Activated T-helper 1 cell treated with anti-CD3 and anti-CD28 coated beads, Interleukin-12 subunit alpha, Interleukin-12 subunit beta, Interleukin-2, Interleukin-4 antibody, amounts not matched to agents 30 ng/mL and 10 ng/mL and 1 ng/mL, durations not matched to agents 14 hours and 24 hours and 36 hours (primary cell): ENCODE measurements at regions of chr1 and their contacts with region 1.

Region 1: GRCh38 chr1:95072532-95073419 is at the start of gene ALG14:
- DNase-seq: peak; percentile 85
- H3K4me3 Mint-ChIP-seq: peak within 1 kb of the TSS; percentile 94
- H3K27ac Mint-ChIP-seq: peak within 1 kb of the TSS; percentile 93
- H3K4me1 Mint-ChIP-seq: peaks cover 18% of the 10 kb centered on the region
- H3K27me3 Mint-ChIP-seq: no peaks in the 10 kb centered on the region
- total RNA-seq, gene ALG14: 1.9 and 2.4 TPM in 2 replicates

Region 2: DNA sequence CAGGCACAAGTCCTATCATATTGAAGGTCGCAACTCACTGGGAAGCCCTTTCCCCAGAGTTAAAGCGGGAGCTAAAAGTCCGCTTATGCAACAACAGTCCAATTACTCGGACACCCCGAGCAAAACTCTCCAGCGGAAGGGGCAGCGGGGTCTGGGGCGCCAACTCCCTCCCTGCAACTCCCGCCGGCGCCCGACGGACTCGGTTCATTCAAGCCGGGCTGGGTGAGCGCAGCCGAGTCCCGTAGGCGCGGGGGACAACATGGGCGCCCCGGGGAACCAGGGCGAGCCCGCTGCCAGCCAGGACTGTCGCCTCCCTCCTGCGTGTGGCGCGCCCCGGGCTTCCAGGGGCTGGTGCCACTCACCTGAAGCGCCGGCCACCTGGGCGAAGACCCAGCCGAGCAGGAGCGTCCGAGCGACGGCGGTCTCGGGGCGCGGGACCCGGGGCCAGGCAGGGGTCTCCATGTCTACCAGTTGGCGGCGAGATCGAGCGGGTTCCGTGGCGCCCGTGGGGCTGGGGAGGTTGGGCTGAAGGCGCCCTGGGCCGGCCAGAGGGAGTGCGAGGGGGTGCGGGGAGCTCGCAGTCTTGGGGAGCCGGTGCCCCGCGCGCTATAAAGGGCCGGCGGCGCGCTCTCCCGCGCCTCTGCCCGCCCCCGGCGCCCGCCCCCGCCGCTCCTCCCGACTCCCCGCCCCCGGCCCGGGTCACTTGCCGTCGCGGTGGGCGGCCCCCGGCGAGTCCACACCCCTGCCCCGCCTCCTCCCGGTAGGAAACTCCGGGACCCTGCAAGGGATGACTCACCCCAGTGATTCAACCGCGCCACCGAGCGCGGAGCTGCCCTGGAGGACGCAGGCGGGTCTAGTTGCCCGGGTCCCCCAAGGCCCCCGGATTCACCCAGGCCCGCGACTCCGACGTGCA is 531.3 kb before region 1 on chr1 and contains the start of gene F3:
- intact Hi-C with region 1: loop called (anchors 10 kb)
- DNase-seq: peak; percentile 68
- H3K4me3 Mint-ChIP-seq: peak within 1 kb of the TSS; percentile 86
- H3K27ac Mint-ChIP-seq: peak within 1 kb of the TSS; percentile 33
- H3K4me1 Mint-ChIP-seq: peaks cover 20% of the 10 kb centered on the region
- H3K27me3 Mint-ChIP-seq: peaks cover 79% of the 10 kb centered on the region
- total RNA-seq, gene F3: 0.16 and 0.32 TPM in 2 replicates

Region 3: GRCh38 chr1:95043141-95043980 is 29.4 kb before region 1 on chr1:
- intact Hi-C with region 1: loop called (anchors 1 kb)
- DNase-seq: peak; percentile 69
- H3K4me3 Mint-ChIP-seq: no peak overlapping the region
- H3K27ac Mint-ChIP-seq: no peak overlapping the region
- H3K4me1 Mint-ChIP-seq: no peaks in the 10 kb centered on the region
- H3K27me3 Mint-ChIP-seq: no peaks in the 10 kb centered on the region

Region 4: GRCh38 chr1:95233737-95234500 is 161.1 kb after region 1 on chr1 and contains the start of gene RWDD3:
- intact Hi-C with region 1: loop called (anchors 1 kb)
- DNase-seq: peak; percentile 92
- H3K4me3 Mint-ChIP-seq: peak within 1 kb of the TSS; percentile 94
- H3K27ac Mint-ChIP-seq: peak within 1 kb of the TSS; percentile 93
- H3K4me1 Mint-ChIP-seq: peaks cover 29% of the 10 kb centered on the region
- H3K27me3 Mint-ChIP-seq: peaks cover 19% of the 10 kb centered on the region
- total RNA-seq, gene RWDD3: 10.6 and 10.8 TPM in 2 replicates